IMR-90 (cell line): ENCODE measurements at regions of chr6 and their contacts with region 1.

Region 1: GRCh38 chr6:99330159-99330558 is 19.3 kb downstream of the FAXC start:
- DNase-seq: peak; percentile 79
- ATAC-seq: peak; percentile 89
- H3K4me3 ChIP-seq: no peak overlapping the region
- H3K27ac ChIP-seq: no peak overlapping the region
- H3K4me1 ChIP-seq: no peaks in the 10 kb centered on the region
- H3K27me3 ChIP-seq: no peaks in the 10 kb centered on the region
- CTCF ChIP-seq: peak; percentile 78
- POLR2A ChIP-seq: no peak
- RAD21 ChIP-seq: peak; percentile 63

Region 2: DNA sequence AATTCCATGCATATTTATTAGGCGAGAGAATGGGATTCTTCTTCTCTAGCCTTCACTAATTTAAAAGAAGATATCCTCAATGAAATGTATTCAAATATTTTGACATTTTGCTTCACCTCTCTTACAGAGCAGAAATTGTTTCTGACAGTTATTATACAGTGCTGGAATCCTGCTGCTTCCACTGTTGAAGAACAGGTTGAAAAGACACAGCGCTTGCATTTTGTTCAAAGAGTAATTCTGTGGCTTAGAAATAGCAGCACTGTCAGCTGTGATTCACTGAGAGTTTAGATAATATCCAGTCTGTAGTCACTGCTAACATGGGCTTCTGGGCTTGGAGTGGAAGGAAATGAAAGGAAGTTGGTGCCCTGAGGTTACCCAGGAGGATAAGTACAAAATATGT is 265.3 kb before region 1 on chr6:
- CTCF ChIA-PET with region 1: no interaction called
- POLR2A ChIA-PET with region 1: no interaction called
- dilution Hi-C with region 1: no loop called
- in situ Hi-C with region 1: no loop called
- intact Hi-C with region 1: no loop called
- DNase-seq: no peak
- ATAC-seq: no peak
- H3K4me3 ChIP-seq: no peak overlapping the region
- H3K27ac ChIP-seq: no peak overlapping the region
- H3K4me1 ChIP-seq: no peaks in the 10 kb centered on the region
- H3K27me3 ChIP-seq: no peaks in the 10 kb centered on the region
- CTCF ChIP-seq: no peak
- POLR2A ChIP-seq: no peak
- RAD21 ChIP-seq: no peak

Region 3: GRCh38 chr6:99310550-99310949 is 19.6 kb before region 1 on chr6:
- CTCF ChIA-PET with region 1: interaction called, 12 read pairs
- POLR2A ChIA-PET with region 1: no interaction called
- dilution Hi-C with region 1: no loop called
- in situ Hi-C with region 1: no loop called
- intact Hi-C with region 1: no loop called
- DNase-seq: no peak
- ATAC-seq: no peak
- H3K4me3 ChIP-seq: no peak overlapping the region
- H3K27ac ChIP-seq: no peak overlapping the region
- H3K4me1 ChIP-seq: no peaks in the 10 kb centered on the region
- H3K27me3 ChIP-seq: no peaks in the 10 kb centered on the region
- CTCF ChIP-seq: no peak
- POLR2A ChIP-seq: no peak
- RAD21 ChIP-seq: no peak

Region 4: DNA sequence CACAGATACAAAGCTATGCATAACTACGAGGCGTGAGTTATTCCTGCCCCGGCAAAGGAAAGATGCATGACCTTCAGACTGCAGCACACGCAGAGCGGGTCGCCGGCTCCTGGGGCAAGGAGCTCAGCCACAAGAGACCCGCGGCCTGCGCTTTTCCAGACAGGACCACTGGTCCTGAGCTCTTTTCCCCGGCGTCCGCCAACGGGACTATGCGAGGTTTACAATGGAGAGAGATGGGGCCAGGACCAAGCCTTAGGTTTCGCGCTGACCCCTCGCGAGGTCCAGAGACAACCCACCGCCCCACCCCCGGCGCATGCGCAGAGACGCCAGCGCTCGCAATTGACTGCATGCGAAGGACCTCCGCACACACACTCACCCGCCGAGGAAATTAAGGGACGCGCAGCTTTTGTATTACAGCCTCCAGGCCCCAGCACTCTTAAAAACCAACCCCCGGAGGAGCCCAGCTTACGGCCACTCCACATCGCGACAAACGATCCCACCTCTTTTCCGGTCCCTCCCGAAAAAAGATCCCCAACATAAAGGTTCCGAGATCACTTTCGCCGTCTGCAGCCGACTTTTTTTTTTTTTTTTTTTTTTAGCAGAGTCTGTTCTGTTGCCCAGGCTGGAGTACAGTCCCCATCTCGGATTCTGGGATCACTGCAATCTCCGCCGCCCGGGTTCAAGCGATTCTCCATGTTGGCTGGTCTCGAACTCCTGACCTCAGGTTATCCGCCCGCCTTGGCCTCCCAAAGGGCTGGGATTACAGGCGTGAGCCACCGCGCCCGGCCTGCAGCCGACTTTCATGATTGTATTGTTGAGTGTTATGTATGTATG is 63.8 kb after region 1 on chr6 and contains the start of gene COQ3:
- CTCF ChIA-PET with region 1: interaction called, 3 read pairs
- POLR2A ChIA-PET with region 1: no interaction called
- dilution Hi-C with region 1: no loop called
- in situ Hi-C with region 1: no loop called
- intact Hi-C with region 1: loop called (anchors 2 kb)
- DNase-seq: peak; percentile 71
- ATAC-seq: peak; percentile 95
- H3K4me3 ChIP-seq: peak within 1 kb of the TSS; percentile 60
- H3K27ac ChIP-seq: peak within 1 kb of the TSS; percentile 86
- H3K4me1 ChIP-seq: no peaks in the 10 kb centered on the region
- H3K27me3 ChIP-seq: no peaks in the 10 kb centered on the region
- CTCF ChIP-seq: no peak
- POLR2A ChIP-seq: peak; percentile 77
- RAD21 ChIP-seq: no peak
- total RNA-seq, gene COQ3: 8.2 and 9.2 TPM in 2 replicates

Region 5: GRCh38 chr6:99520855-99521632 is 190.9 kb after region 1 on chr6:
- CTCF ChIA-PET with region 1: no interaction called
- POLR2A ChIA-PET with region 1: no interaction called
- dilution Hi-C with region 1: no loop called
- in situ Hi-C with region 1: no loop called
- intact Hi-C with region 1: loop called (anchors 5 kb)
- DNase-seq: peak; percentile 77
- ATAC-seq: peak; percentile 95
- H3K4me3 ChIP-seq: peak overlapping the region; percentile 87
- H3K27ac ChIP-seq: peak overlapping the region; percentile 96
- H3K4me1 ChIP-seq: peaks cover 2% of the 10 kb centered on the region; the same call in 1 of the 2 replicates
- H3K27me3 ChIP-seq: no peaks in the 10 kb centered on the region
- CTCF ChIP-seq: peak; percentile 80
- POLR2A ChIP-seq: peak; percentile 84
- RAD21 ChIP-seq: peak; percentile 54

Region 6: DNA sequence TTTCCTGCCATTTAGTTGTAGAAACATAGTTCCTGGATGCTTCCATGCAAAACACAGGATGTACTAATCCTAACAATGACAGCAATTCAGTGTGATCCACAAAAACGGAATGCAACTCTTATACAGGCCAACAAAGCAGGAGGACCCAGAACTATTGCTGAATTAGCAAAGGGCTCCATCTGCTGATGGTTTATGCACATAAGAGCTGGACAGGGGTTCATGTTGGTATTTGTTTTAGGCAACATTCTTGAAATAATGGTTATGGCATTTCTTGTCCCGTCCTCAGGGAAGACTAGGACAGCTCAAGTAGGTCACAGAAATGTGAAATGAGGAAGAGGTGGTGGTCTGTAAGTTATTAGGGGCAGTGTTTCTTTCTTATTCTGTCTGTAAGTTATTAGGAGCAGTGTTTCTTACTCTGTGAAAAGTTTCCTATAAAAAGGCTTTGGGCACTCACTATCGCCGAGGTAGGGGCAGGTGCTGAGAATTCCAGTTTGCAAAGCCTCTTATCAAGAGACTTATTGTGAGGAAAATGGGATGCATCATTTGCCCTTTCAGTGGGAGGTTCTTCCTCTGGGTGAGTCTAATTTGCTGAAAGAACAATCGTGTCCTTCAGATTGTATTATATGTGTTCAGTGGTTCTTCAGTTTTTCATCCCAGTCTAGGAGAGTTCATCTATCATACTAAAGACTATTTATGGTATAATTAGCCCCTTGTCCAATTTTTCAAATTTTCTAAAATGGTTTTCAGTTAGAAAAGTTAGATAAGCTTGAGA is 492.8 kb after region 1 on chr6:
- CTCF ChIA-PET with region 1: interaction called, 7 read pairs
- POLR2A ChIA-PET with region 1: no interaction called
- dilution Hi-C with region 1: no loop called
- in situ Hi-C with region 1: no loop called
- intact Hi-C with region 1: loop called (anchors 1 kb)
- DNase-seq: peak; percentile 82
- ATAC-seq: peak; percentile 99
- H3K4me3 ChIP-seq: peak overlapping the region; percentile 56; the same call in 1 of the 2 replicates
- H3K27ac ChIP-seq: no peak overlapping the region
- H3K4me1 ChIP-seq: no peaks in the 10 kb centered on the region
- H3K27me3 ChIP-seq: no peaks in the 10 kb centered on the region
- CTCF ChIP-seq: peak; percentile 70
- POLR2A ChIP-seq: no peak
- RAD21 ChIP-seq: peak; percentile 72